ENCODE measurements at regions of chr5 and their contacts with region 1.

Region 1: DNA sequence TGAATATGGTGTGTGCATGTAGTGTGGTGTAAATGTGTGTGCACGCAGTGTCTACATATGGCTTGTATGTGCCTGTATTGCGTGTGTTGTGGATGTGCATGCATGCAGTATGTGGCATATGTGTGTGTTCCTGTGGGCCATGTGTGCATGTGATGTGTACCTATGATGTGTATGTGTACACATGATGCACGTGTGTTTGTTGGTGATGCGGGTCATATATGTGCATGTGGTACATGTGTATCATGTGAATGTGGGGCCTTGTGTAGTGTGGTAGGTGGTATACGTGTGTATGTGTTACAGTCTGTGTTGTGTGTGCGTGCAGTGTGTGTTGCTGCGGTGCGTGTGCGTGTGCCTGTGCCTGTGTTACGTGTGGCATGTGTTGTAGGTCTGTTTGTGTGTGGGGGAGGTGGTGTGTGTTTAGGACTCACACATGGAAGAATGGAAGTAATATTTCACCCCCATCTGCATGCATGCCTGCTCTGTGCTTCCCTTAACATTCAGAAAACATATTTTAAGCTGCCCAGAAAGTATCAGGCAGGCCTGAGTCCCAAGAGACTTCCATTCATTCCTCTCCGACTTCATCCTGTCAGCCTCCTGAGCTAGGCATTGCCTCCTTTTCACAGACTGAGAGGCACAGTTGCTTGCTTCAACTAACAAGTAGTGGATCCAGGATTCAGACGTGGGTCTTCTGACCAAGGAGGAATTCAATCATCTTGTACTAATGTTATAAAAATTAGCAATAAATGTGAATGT is 55.4 kb upstream of the RUFY1 start:
- DNase-seq: peak; percentile 8
- ATAC-seq: no peak

Region 2: GRCh38 chr5:179166886-179167841 is 327.8 kb before region 1 on chr5:
- intact Hi-C with region 1: loop called (anchors 5 kb)
- DNase-seq: peak; percentile 57
- ATAC-seq: peak; percentile 89

Region 3: DNA sequence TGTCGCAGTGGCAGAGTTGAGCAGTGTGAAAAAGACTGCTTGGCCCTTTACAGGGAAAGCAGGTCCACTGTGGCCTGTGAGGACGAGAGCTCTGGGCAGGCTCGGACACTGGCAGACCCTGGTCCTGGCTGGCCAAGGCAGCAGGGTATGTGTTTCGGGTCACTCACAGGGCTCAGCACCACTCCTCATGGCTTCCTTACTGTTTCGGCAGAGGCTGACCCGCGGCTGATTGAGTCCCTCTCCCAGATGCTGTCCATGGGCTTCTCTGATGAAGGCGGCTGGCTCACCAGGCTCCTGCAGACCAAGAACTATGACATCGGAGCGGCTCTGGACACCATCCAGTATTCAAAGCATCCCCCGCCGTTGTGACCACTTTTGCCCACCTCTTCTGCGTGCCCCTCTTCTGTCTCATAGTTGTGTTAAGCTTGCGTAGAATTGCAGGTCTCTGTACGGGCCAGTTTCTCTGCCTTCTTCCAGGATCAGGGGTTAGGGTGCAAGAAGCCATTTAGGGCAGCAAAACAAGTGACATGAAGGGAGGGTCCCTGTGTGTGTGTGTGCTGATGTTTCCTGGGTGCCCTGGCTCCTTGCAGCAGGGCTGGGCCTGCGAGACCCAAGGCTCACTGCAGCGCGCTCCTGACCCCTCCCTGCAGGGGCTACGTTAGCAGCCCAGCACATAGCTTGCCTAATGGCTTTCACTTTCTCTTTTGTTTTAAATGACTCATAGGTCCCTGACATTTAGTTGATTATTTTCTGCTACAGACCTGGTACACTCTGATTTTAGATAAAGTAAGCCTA is 341.5 kb after region 1 on chr5:
- intact Hi-C with region 1: no loop called
- DNase-seq: no peak
- ATAC-seq: peak; percentile 4